Ovary (tissue), 10 donors: ENCODE measurements at regions of chr12 and their contacts with region 1.

Region 1: DNA sequence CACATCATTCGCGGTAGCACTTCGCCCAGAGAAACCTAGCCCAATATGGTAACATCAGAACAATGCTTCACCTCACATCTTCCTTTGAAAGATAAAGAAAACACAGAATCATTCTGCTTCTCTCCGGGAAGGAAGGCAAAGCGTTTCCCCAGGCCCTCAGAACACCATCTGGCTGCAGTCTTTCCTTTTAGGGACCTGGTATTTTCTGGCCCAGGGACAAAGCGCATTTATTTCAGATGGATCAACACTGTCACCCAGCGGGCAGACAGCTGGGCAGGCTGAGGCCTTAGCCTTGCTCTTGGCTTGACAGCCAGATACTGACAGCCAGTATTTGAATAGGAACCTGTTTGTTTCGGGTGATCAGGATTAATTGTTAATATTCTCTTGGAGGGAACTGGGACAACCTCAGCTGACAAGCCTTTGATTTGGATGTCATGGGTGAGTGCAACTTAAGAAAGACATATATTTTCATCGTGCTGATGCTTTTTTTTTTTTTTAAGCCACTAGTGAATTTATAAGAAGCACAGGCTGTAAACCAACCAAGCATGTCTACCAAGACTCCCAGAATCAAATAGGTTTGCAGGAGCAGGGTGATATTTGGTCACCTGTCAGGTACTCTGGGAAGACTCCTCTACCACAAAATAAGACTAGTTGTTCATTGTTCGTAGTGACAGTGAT is 118.9 kb downstream of the VEZT start:
- DNase-seq: peak; percentile 61 to 81 (median 78)
- H3K4me3 ChIP-seq: no peak overlapping the region
- H3K27ac ChIP-seq: no peak overlapping the region
- H3K4me1 ChIP-seq: no peaks in the 10 kb centered on the region
- H3K27me3 ChIP-seq: no peaks in the 10 kb centered on the region
- CTCF ChIP-seq: peak; percentile 66 to 76 (median 67)
- EP300 ChIP-seq: no peak
- POLR2A ChIP-seq: no peak

Region 2: DNA sequence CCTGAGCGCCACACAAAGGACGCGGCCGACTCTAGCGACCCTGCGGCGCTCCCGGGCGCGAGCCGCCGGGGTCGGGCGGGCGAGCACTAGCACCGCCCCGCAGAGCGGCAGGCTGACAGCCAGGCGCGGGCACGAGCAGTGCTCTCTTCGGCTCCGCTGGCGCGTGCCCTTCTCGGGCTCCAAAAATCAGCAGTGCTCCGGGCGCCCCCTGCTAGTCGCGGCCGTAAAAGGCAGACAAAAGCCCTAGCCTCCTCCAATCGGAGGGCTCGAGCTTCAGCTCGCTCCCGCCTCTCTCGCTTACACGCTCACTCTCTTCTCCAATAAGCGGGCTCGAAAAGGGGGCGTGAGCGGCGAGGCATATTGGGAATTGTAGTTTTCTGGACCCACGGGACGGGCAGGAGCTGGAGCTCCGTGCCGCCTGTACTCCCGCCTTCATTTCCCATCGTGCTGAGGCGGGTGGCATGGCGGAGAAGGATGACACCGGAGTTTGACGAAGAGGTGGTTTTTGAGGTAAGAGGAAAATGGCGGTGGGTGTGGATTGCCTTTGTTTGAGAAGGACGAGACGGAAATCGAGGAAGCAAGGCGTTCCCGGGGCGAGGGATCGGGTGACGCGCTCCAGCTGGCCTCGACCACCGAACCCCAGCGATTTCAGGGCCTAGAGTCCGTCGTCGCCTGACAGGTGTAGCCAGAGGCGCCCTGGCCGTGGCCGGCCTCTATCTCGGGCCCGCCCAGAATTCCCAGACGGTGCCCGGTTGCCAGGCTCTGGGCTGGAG is 119.0 kb before region 1 on chr12 and contains the starts of genes FGD6 and VEZT:
- intact Hi-C with region 1: loop called in 1 of 4 experiments (anchors 1 kb)
- DNase-seq: peak; percentile 98 to 99 (median 98)
- H3K4me3 ChIP-seq: peak within 1 kb of the TSS; percentile 81
- H3K27ac ChIP-seq: peak within 1 kb of the TSS; percentile 94 to 97
- H3K4me1 ChIP-seq: peaks cover 7% of the 10 kb centered on the region
- H3K27me3 ChIP-seq: no peaks in the 10 kb centered on the region
- CTCF ChIP-seq: peak in 2 of 3 donors; percentile 76 to 84
- EP300 ChIP-seq: peak; percentile 24
- POLR2A ChIP-seq: peak; percentile 82
- total RNA-seq, gene FGD6: 7.0 to 18.7 (median 15.8) TPM
- total RNA-seq, gene VEZT: 52.1 to 67.7 (median 53.5) TPM